ENCODE measurements at regions of chr5 and their contacts with region 1.

Region 1: GRCh38 chr5:143094087-143094521 is 309.4 kb downstream of the NR3C1 start:
- DNase-seq: no peak
- H3K4me3 ChIP-seq: no peak overlapping the region
- H3K27ac ChIP-seq: no peak overlapping the region
- H3K4me1 ChIP-seq: no peaks in the 10 kb centered on the region
- CTCF ChIP-seq: no peak

Region 2: DNA sequence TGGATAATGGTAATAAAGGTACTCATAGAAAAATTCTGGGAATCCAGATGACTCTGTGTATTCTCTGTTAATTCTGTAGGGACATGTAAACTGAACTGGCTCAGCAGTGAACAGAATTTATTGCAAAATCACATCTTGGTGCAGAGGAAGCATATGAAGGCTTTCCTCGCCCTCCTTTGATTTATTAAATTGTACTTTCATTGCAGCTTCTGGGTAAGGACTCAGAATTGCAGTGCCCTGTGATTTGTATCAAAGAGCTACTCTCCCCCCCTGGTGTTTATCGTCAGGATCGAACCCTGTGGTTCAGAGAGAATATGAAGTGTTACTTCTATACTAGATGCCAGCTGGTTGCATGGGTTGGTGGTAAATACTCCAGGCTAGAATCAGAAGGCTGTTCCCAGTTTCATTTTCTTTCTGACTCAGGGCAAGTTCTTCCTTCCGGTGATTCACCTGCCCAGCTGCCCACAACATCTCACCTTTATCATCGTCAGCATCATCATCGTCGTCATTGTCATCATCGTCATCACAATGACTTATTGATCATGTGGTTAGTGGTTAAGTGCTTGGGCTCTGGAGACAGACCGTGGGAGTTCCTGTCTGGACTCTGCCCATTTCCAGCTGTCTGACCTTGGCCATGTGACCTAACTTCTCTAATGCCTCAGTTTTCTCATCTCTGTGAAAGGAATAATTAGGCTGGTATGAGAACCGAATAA is 85.1 kb before region 1 on chr5:
- CTCF ChIA-PET with region 1: no interaction called
- POLR2A ChIA-PET with region 1: no interaction called
- intact Hi-C with region 1: no loop called
- DNase-seq: no peak
- H3K4me3 ChIP-seq: no peak overlapping the region
- H3K27ac ChIP-seq: no peak overlapping the region
- H3K4me1 ChIP-seq: peaks cover 8% of the 10 kb centered on the region
- CTCF ChIP-seq: no peak

Region 3: DNA sequence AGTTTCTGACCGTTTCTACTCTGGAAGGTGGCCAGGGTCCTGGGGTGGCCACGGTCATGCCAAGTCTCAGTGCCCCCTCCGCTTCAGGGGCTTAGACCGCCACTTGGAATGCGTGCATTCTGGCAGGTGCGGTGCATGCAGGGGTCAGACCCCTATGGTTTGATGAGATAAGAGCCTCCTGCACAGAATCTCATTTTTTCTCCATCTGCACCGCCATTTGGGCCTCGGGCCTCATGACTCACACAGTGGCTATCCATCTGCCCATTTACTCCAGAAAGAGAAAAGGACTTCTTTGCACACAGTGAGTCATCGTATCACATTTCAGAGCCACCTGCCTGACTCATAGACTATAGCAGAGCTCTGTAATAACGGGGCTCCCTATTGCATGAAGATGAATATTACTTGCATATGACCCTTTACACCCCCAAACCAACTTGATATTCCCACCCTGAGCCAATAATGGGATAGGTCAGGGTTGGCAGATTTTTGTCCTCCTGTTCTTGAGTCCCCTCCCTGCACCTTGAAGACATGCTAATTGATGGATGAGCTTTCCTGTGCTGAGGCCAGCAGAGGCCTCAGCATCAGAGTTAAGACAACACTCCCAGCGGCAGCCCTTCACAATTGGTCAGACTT is 151.9 kb after region 1 on chr5:
- CTCF ChIA-PET with region 1: no interaction called
- POLR2A ChIA-PET with region 1: interaction called, 10 read pairs
- intact Hi-C with region 1: no loop called
- DNase-seq: no peak
- H3K4me3 ChIP-seq: no peak overlapping the region
- H3K27ac ChIP-seq: no peak overlapping the region
- H3K4me1 ChIP-seq: no peaks in the 10 kb centered on the region
- CTCF ChIP-seq: no peak